ENCODE measurements at regions of chr6 and their contacts with region 1.

Region 1: GRCh38 chr6:114155763-114156162 is 184.8 kb upstream of the HDAC2 start:
- DNase-seq: no peak
- H3K4me3 ChIP-seq: no peak overlapping the region
- H3K27ac ChIP-seq: no peak overlapping the region
- H3K4me1 ChIP-seq: no peaks in the 10 kb centered on the region
- H3K27me3 ChIP-seq: no peaks in the 10 kb centered on the region
- CTCF ChIP-seq: no peak
- POLR2A ChIP-seq: no peak

Region 2: DNA sequence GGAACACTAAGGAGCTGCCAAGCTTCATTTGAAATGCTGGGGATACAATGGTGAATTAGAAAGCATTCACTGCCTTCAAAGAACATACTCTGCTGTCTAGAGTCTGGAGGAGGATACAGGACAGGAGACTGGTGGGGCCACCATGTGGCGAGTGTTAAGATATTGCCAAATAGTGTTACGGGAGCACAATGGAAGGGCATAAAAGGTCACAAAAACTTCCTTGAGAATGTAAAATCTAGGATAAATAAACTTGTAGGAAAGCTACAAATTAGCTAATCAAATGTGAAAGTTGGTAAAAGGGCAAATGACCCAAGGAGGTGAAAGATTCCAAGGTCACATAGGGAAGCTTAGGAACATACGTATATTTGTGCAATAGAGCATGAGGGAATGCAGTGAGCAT is 1536.9 kb before region 1 on chr6:
- intact Hi-C with region 1: no loop called
- DNase-seq: no peak
- H3K4me3 ChIP-seq: no peak overlapping the region
- H3K27ac ChIP-seq: no peak overlapping the region
- H3K4me1 ChIP-seq: no peaks in the 10 kb centered on the region
- H3K27me3 ChIP-seq: no peaks in the 10 kb centered on the region
- CTCF ChIP-seq: no peak
- POLR2A ChIP-seq: no peak

Region 3: GRCh38 chr6:114181664-114182063 is 25.9 kb after region 1 on chr6:
- intact Hi-C with region 1: loop called (anchors 1 kb)
- DNase-seq: no peak
- H3K4me3 ChIP-seq: no peak overlapping the region
- H3K27ac ChIP-seq: no peak overlapping the region
- H3K4me1 ChIP-seq: no peaks in the 10 kb centered on the region
- H3K27me3 ChIP-seq: no peaks in the 10 kb centered on the region
- CTCF ChIP-seq: no peak
- POLR2A ChIP-seq: no peak

Region 4: GRCh38 chr6:114987281-114987680 is 831.5 kb after region 1 on chr6:
- intact Hi-C with region 1: no loop called
- DNase-seq: no peak
- H3K4me3 ChIP-seq: no peak overlapping the region
- H3K27ac ChIP-seq: no peak overlapping the region
- H3K4me1 ChIP-seq: no peaks in the 10 kb centered on the region
- H3K27me3 ChIP-seq: no peaks in the 10 kb centered on the region
- CTCF ChIP-seq: no peak
- POLR2A ChIP-seq: no peak

Measured in breast epithelium (tissue), 4 donors.